CD8-positive, alpha-beta memory T cell (primary cell): ENCODE measurements at regions of chr5 and their contacts with region 1.

Region 1: GRCh38 chr5:68215208-68215897 is at the start of gene PIK3R1:
- DNase-seq: peak; percentile 89 to 94 (median 92)
- H3K4me3 ChIP-seq: peak within 1 kb of the TSS; percentile 85
- H3K4me3 Mint-ChIP-seq: peak within 1 kb of the TSS; percentile 88 to 96 (median 91)
- H3K27ac ChIP-seq: peak within 1 kb of the TSS; percentile 77
- H3K27ac Mint-ChIP-seq: peak within 1 kb of the TSS; percentile 88 to 96 (median 92)
- H3K4me1 ChIP-seq: peaks cover 33% of the 10 kb centered on the region
- H3K4me1 Mint-ChIP-seq: peaks cover 47% of the 10 kb centered on the region in 3 donors
- H3K27me3 ChIP-seq: no peaks in the 10 kb centered on the region
- H3K27me3 Mint-ChIP-seq: no peaks in the 10 kb centered on the region
- total RNA-seq, gene PIK3R1: 46.9 to 47.9 TPM

Region 2: GRCh38 chr5:68229416-68229815 is 14.1 kb after region 1 on chr5:
- CTCF ChIA-PET with region 1: interaction called, 6 read pairs
- POLR2A ChIA-PET with region 1: interaction called, 10 read pairs
- DNase-seq: no peak
- H3K4me3 ChIP-seq: no peak overlapping the region
- H3K4me3 Mint-ChIP-seq: peak overlapping the region in 3 of 7 donors; percentile 5 to 33 (median 9)
- H3K27ac ChIP-seq: no peak overlapping the region
- H3K27ac Mint-ChIP-seq: peak overlapping the region in 5 of 8 donors; percentile 11 to 62 (median 44)
- H3K4me1 ChIP-seq: peaks cover 56% of the 10 kb centered on the region
- H3K4me1 Mint-ChIP-seq: peaks cover 91 to 100% (median 99%) of the 10 kb centered on the region in 3 donors
- H3K27me3 ChIP-seq: no peaks in the 10 kb centered on the region
- H3K27me3 Mint-ChIP-seq: peaks cover 0 to 3% of the 10 kb centered on the region in 2 donors

Region 3: DNA sequence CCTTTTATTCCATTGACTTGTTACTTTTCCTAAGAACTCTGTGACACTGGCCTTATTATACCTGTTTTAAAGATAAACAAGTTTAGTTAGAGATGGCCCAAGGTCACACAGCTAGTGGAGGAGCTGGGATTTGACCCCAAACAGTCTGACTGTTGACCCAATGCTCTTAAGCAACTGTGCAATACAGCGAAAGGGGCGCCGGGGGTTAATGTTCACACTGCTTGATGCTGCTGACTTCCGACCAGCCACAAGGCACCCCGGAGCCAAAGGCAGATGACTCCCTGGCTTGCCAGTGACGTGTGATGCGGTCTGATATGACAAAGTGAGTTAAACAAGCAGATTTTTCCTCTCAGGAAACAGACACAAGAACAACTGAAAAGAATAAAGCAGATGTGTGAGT is 24.1 kb after region 1 on chr5:
- CTCF ChIA-PET with region 1: interaction called, 6 read pairs
- POLR2A ChIA-PET with region 1: interaction called, 13 read pairs
- DNase-seq: peak; percentile 65 to 88 (median 81)
- H3K4me3 ChIP-seq: no peak overlapping the region
- H3K4me3 Mint-ChIP-seq: peak overlapping the region; percentile 15 to 82 (median 66)
- H3K27ac ChIP-seq: no peak overlapping the region
- H3K27ac Mint-ChIP-seq: peak overlapping the region; percentile 79 to 94 (median 88)
- H3K4me1 ChIP-seq: peaks cover 71% of the 10 kb centered on the region
- H3K4me1 Mint-ChIP-seq: peaks cover 78 to 94% (median 94%) of the 10 kb centered on the region in 3 donors
- H3K27me3 ChIP-seq: no peaks in the 10 kb centered on the region
- H3K27me3 Mint-ChIP-seq: no peaks in the 10 kb centered on the region

Region 4: DNA sequence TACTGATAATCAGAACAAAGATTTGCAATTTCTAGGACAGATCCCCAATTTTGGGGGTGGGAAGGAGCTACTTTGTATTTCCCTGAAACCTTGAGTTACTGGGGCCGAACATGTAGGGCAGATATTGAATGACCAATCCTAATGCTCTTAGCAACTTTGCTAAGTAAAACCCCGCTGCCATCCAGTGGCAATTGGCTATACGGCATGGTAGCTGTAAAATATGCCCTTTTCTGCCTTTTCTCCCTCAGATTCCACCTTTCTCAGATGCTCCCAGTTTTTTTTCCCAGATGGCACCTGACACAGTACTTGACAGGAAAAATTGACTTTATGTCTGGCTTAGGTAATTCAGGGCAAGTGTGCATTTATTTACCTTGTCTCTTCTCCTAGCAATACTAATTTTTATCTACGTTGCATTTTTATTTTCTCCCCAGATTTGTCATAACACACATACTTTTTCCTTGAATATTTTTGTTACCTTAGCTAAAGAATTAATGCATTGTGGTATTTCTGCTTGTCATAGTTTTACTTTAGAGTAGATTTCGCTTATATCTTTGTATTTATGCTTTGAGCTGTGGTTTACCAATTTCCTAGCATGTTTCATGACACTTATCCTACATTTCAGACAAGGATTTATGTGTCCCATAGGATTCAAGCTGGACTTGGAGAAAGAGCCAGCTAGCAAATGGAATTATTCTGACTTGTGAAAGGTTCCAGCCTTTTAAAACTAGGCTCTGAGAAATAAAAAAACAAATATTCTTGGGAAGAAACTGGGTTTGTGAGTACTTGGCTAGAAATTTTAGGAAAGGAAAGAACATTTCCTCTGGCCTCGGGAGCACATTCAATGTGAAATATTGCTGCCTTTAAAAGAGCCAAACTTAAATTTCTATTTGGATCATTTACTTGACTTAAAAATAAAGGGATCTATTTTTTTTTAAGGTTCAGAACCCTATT is 37.6 kb after region 1 on chr5:
- CTCF ChIA-PET with region 1: interaction called, 25 read pairs
- POLR2A ChIA-PET with region 1: interaction called, 12 read pairs
- DNase-seq: peak in 2 of 5 donors; percentile 21 to 59
- H3K4me3 ChIP-seq: no peak overlapping the region
- H3K4me3 Mint-ChIP-seq: peak overlapping the region in 4 of 7 donors; percentile 9 to 56 (median 28)
- H3K27ac ChIP-seq: no peak overlapping the region
- H3K27ac Mint-ChIP-seq: peak overlapping the region in 6 of 8 donors; percentile 2 to 96 (median 90)
- H3K4me1 ChIP-seq: peaks cover 93% of the 10 kb centered on the region
- H3K4me1 Mint-ChIP-seq: peaks cover 90 to 96% (median 96%) of the 10 kb centered on the region in 3 donors
- H3K27me3 ChIP-seq: no peaks in the 10 kb centered on the region
- H3K27me3 Mint-ChIP-seq: no peaks in the 10 kb centered on the region

Region 5: DNA sequence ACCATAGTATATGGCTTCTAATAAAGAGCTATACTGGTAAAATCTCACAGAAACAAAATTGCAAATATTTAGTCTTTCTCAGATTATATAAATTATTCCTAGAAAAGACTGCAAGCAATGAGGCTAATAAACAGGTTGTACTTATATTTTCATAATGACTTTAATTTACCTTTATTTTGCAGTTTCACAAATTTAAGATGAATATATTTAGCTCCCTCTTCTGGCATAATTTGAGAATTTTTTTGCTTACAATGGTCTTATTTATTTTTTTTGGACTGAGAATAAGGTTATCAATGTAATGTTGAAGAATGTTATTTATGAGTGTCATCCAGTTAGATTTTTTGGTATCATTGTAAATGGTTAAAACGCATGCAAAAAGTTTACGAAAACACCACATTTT is 56.9 kb after region 1 on chr5:
- CTCF ChIA-PET with region 1: interaction called, 11 read pairs
- POLR2A ChIA-PET with region 1: interaction called, 4 read pairs
- DNase-seq: no peak
- H3K4me3 ChIP-seq: no peak overlapping the region
- H3K4me3 Mint-ChIP-seq: peak overlapping the region in 2 of 7 donors; percentile 5 to 13
- H3K27ac ChIP-seq: no peak overlapping the region
- H3K27ac Mint-ChIP-seq: peak overlapping the region in 7 of 8 donors; percentile 27 to 91 (median 70)
- H3K4me1 ChIP-seq: peaks cover 94% of the 10 kb centered on the region
- H3K4me1 Mint-ChIP-seq: peaks cover 84 to 95% (median 95%) of the 10 kb centered on the region in 3 donors
- H3K27me3 ChIP-seq: no peaks in the 10 kb centered on the region
- H3K27me3 Mint-ChIP-seq: no peaks in the 10 kb centered on the region

Region 6: DNA sequence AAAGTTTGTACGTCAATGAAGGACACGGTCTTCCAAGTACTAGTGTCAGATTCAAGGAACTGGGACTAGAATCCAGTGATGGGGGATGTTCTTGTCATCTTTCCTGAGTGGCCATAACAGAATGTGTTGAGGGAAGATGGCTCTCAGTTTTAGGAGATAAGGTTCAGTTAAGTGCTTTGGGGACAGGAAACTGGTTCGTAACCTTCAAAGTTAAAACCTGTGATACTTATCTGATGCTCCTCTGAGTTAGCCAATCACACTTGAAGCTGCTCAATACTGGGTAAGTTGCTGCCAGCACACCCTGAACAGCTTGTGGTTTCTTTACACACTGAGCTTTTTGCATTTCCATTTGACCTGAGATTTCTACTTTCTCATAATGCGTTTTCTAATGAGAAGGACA is 64.6 kb after region 1 on chr5:
- CTCF ChIA-PET with region 1: interaction called, 4 read pairs
- POLR2A ChIA-PET with region 1: interaction called, 20 read pairs
- DNase-seq: peak in 4 of 5 donors; percentile 40 to 83 (median 75)
- H3K4me3 ChIP-seq: peak overlapping the region; percentile 58
- H3K4me3 Mint-ChIP-seq: peak overlapping the region; percentile 89 to 97 (median 91)
- H3K27ac ChIP-seq: peak overlapping the region; percentile 48
- H3K27ac Mint-ChIP-seq: peak overlapping the region; percentile 85 to 96 (median 94)
- H3K4me1 ChIP-seq: peaks cover 83% of the 10 kb centered on the region
- H3K4me1 Mint-ChIP-seq: peaks cover 82 to 90% (median 85%) of the 10 kb centered on the region in 3 donors
- H3K27me3 ChIP-seq: no peaks in the 10 kb centered on the region
- H3K27me3 Mint-ChIP-seq: no peaks in the 10 kb centered on the region